Activated naive CD4-positive, alpha-beta T cell treated with anti-CD3 and anti-CD28 coated beads for 36 hours (primary cell): ENCODE measurements at regions of chrX and their contacts with region 1.

Region 1: DNA sequence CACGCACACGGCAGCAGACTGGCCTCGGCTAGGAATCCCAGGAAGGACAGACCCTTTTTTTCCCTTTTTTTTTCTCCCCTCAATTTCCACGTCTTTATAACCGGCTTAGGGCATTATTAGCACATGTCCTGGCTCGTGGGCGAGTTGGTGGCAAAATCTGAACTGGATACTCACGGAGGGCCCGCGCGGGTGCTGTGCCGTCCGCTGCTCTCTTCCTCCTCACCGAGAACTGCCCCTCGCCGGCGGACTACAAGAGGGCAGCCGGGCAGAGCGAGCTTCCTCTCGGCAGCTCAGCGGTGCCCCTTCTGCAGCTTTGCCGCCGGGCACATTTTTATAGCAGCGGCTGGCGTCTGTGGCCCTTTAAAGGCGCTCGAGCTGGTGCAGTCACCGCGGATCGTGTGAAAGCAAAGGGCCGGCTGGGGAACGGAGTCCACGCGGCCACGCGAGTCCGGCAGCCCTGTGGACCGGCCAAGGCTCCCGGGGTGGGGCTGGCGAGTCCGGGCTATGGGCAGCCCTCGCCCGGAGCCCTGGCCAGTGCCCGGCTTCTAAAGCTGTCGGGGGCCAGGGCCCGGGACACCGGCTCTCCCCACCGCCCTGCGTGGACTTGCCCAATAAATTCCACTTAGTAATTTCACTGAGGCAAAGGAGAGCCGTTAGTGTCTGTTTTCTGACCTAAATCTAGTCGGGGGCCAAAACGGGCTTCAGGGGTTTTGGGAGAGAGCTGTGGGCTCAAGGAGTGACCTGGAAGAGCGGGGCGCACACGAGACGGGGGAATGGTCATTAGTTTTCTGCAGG is 1.3 kb upstream of the CITED1 start:
- DNase-seq: peak; percentile 8
- H3K4me3 Mint-ChIP-seq: peak overlapping the region; percentile 68
- H3K27ac Mint-ChIP-seq: no peak overlapping the region
- H3K4me1 Mint-ChIP-seq: peaks cover 20% of the 10 kb centered on the region
- H3K27me3 Mint-ChIP-seq: peaks cover 50% of the 10 kb centered on the region

Region 2: GRCh38 chrX:72018277-72019112 is 288.6 kb before region 1 on chrX:
- CTCF ChIA-PET with region 1: no interaction called
- intact Hi-C with region 1: no loop called
- DNase-seq: peak; percentile 84
- H3K4me3 Mint-ChIP-seq: no peak overlapping the region
- H3K27ac Mint-ChIP-seq: no peak overlapping the region
- H3K4me1 Mint-ChIP-seq: peaks cover 25% of the 10 kb centered on the region
- H3K27me3 Mint-ChIP-seq: peaks cover 10% of the 10 kb centered on the region

Region 3: DNA sequence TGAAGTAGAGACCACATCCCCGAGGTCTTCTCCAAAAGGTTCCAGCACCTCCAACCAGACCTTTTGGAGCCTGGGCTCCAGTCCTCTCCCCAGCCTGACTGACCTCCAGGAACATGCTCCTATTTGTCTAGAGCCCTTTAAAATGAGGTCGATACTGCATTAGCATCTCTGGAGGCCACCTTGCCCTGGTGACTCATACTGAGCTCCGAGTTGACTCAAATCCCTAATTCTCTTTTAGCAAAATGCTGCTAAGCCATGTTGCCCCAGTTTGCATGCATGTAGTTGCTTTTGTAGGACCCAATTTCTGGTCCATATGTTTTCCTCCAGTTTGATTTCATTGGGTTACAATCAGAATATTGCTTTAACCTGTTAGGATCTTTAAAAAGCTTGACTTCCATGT is 42.1 kb after region 1 on chrX:
- CTCF ChIA-PET with region 1: no interaction called
- intact Hi-C with region 1: loop called (anchors 2 kb)
- DNase-seq: peak; percentile 41
- H3K4me3 Mint-ChIP-seq: no peak overlapping the region
- H3K27ac Mint-ChIP-seq: no peak overlapping the region
- H3K4me1 Mint-ChIP-seq: peaks cover 14% of the 10 kb centered on the region
- H3K27me3 Mint-ChIP-seq: no peaks in the 10 kb centered on the region

Region 4: GRCh38 chrX:72421797-72422196 is 114.7 kb after region 1 on chrX:
- CTCF ChIA-PET with region 1: no interaction called
- intact Hi-C with region 1: no loop called
- DNase-seq: no peak
- H3K4me3 Mint-ChIP-seq: no peak overlapping the region
- H3K27ac Mint-ChIP-seq: no peak overlapping the region
- H3K4me1 Mint-ChIP-seq: no peaks in the 10 kb centered on the region
- H3K27me3 Mint-ChIP-seq: no peaks in the 10 kb centered on the region